ENCODE measurements at regions of chr12 and their contacts with region 1.

Region 1: GRCh38 chr12:1644534-1645438 is 15.8 kb downstream of the WNT5B start:
- DNase-seq: peak; percentile 69
- H3K4me3 ChIP-seq: no peak overlapping the region
- H3K27ac ChIP-seq: no peak overlapping the region
- H3K4me1 ChIP-seq: no peaks in the 10 kb centered on the region
- H3K27me3 ChIP-seq: no peaks in the 10 kb centered on the region
- CTCF ChIP-seq: no peak

Region 2: GRCh38 chr12:1932264-1932777 is 287.5 kb after region 1 on chr12:
- intact Hi-C with region 1: loop called (anchors 5 kb)
- DNase-seq: peak; percentile 76
- H3K4me3 ChIP-seq: no peak overlapping the region
- H3K27ac ChIP-seq: no peak overlapping the region
- H3K4me1 ChIP-seq: no peaks in the 10 kb centered on the region
- H3K27me3 ChIP-seq: no peaks in the 10 kb centered on the region
- CTCF ChIP-seq: no peak

Region 3: GRCh38 chr12:2034633-2035430 is 390.0 kb after region 1 on chr12:
- intact Hi-C with region 1: loop called (anchors 10 kb)
- DNase-seq: peak; percentile 91
- H3K4me3 ChIP-seq: peak overlapping the region; percentile 19
- H3K27ac ChIP-seq: no peak overlapping the region
- H3K4me1 ChIP-seq: no peaks in the 10 kb centered on the region
- H3K27me3 ChIP-seq: no peaks in the 10 kb centered on the region
- CTCF ChIP-seq: peak; percentile 94